ENCODE measurements at regions of chr5 and their contacts with region 1.

Region 1: DNA sequence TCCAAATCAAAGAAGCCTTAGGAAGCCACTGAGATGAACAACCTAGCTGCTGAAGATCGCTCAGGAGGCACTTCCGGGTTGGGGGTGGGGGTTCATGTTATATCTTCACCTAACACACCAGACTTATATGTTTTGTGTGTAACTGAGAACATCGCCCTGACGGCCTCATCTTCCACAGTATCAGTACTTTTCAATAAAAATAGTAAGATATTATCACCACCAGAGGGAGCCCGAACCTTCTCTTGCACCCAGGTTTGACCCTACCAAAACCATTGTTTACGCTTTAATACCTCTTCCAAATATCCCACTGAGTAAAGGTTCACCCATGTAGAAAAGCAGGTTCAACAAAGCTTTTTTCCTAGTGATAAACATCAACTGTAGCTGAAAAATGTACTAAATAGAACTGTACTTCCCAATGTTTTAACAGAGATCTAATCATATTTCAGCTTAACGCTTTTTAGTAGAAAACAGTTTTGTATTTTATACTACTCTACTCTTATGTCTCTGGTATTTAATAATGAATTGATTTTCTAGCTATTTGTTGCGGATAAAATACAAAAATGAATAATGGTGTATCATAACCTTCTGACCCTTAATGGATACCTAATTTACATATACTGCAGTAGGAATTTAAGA is 244.0 kb downstream of the EPB41L4A start:
- DNase-seq: no peak
- ATAC-seq: peak; percentile 66 to 74

Region 2: GRCh38 chr5:112529525-112529924 is 354.4 kb after region 1 on chr5:
- intact Hi-C with region 1: loop called in 1 of 2 experiments (anchors 10 kb)
- DNase-seq: no peak
- ATAC-seq: peak in 1 of 2 donors; percentile 47